Thyroid gland (tissue), 4 donors: ENCODE measurements at regions of chr10 and their contacts with region 1.

Region 1: GRCh38 chr10:114304017-114304570 is 65.0 kb downstream of the VWA2 start:
- DNase-seq: peak; percentile 89
- H3K4me3 ChIP-seq: peak overlapping the region in 1 of 3 donors; percentile 12
- H3K27ac ChIP-seq: peak overlapping the region; percentile 70 to 92 (median 77)
- H3K4me1 ChIP-seq: peaks cover 11 to 24% of the 10 kb centered on the region in 2 donors
- H3K27me3 ChIP-seq: no peaks in the 10 kb centered on the region
- CTCF ChIP-seq: peak; percentile 51 to 93 (median 76)
- POLR2A ChIP-seq: peak in 1 of 2 donors; percentile 26

Region 2: DNA sequence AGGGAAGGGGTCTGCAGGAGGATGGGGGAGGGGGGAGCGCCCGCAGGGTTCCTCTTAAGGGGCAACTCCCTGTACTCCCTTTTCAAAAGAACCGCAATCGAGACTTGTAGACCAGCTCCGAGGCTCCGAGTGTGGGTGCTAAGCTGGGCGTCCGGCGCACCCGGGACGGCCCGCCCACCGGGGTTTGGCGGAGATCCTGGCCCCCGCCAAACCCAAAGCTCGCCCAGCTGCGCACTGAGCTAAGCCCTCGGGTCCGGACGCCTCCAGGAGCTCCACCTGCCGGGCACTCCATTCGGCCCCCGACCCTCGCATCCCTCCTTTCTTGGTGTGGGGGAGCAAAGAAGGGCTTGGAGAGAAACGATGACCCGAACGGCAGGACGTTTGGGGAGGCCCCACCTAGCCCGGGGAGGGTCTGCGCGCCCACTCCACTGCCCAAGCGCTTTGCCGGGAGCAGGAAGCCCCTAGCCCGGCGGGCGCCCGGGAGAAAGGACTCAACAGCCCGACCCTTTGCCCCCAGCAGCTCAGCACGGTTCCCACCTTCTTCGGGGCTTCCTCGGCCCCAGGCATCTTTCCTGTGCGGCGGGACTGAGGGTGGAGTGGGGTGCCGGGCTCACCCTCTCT is 99.6 kb after region 1 on chr10:
- intact Hi-C with region 1: loop called (anchors 10 kb)
- DNase-seq: peak; percentile 75 to 76
- H3K4me3 ChIP-seq: peak overlapping the region; percentile 56 to 83 (median 66)
- H3K27ac ChIP-seq: peak overlapping the region; percentile 97 to 98 (median 98)
- H3K4me1 ChIP-seq: peaks cover 47 to 58% of the 10 kb centered on the region in 2 donors
- H3K27me3 ChIP-seq: no peaks in the 10 kb centered on the region
- CTCF ChIP-seq: peak in 3 of 6 experiments; percentile 25 to 45 (median 40)
- POLR2A ChIP-seq: peak in 1 of 2 donors; percentile 75

Region 3: DNA sequence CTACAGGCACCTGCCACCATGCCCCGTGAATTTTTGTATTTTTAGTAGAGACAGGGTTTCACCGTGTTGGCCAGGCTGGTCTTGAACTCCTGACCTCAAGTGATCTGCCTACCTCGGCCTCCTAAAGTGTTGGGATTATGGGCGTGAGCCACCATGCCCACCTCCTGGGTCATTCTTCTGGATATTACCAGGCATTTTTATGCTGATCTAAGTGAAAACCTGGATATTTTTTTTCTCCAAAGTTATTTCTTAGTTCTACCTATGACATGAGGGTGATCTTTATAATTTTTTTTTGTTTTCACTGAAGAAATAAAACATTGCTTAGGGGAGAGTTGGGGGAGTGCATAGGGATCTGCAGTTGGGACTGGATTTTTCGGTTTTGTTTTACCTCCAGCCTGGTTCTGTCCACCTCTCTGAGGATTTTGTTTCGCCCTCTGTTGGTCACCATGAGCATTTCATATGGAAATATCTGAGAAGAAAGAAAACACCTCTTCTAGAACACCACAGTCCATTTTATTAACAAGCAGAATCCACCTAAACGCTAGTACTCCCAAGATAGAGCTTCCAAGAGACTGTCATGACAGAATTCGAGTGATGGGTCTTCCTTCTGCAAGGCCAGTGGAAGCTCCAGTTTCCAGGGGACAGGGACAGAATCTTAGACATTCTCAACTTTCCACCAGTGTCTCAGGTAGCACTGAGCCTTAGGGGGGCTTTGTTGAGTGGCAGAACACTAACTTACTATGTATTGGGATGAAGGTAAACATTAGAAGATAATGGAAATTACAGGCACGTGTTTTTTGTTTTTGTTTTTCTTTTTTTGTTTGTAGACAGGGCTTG is 133.6 kb after region 1 on chr10:
- intact Hi-C with region 1: loop called (anchors 10 kb)
- DNase-seq: no peak
- H3K4me3 ChIP-seq: no peak overlapping the region
- H3K27ac ChIP-seq: peak overlapping the region; percentile 77 to 91 (median 87)
- H3K4me1 ChIP-seq: peaks cover 25 to 32% of the 10 kb centered on the region in 2 donors
- H3K27me3 ChIP-seq: no peaks in the 10 kb centered on the region
- CTCF ChIP-seq: peak in 4 of 6 experiments; percentile 19 to 46 (median 38)
- POLR2A ChIP-seq: no peak

Region 4: DNA sequence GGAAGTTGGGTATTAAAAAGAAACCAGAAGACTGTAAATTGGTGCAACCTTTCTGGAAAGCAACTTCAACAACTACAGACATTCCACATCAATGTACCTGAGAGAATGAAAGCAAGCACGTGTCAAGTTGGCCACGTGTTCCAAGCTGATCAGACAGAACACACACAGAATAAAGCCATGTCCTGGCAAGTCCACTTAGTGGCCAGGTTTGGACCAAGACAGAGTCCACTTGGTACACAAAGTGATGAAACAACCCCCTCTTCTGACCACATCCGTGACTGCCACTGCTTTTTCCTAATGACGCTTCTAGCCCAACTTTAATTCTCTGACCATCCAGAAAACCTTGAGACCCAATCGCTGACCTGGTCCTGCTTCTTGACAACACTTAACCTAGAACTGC is 244.6 kb after region 1 on chr10:
- intact Hi-C with region 1: loop called (anchors 10 kb)
- DNase-seq: peak; percentile 88 to 90
- H3K4me3 ChIP-seq: no peak overlapping the region
- H3K27ac ChIP-seq: peak overlapping the region; percentile 19 to 49 (median 47)
- H3K4me1 ChIP-seq: peaks cover 21 to 24% of the 10 kb centered on the region in 2 donors
- H3K27me3 ChIP-seq: no peaks in the 10 kb centered on the region
- CTCF ChIP-seq: peak in 4 of 6 experiments; percentile 65 to 95 (median 83)
- POLR2A ChIP-seq: peak in 1 of 2 donors; percentile 16

Region 5: DNA sequence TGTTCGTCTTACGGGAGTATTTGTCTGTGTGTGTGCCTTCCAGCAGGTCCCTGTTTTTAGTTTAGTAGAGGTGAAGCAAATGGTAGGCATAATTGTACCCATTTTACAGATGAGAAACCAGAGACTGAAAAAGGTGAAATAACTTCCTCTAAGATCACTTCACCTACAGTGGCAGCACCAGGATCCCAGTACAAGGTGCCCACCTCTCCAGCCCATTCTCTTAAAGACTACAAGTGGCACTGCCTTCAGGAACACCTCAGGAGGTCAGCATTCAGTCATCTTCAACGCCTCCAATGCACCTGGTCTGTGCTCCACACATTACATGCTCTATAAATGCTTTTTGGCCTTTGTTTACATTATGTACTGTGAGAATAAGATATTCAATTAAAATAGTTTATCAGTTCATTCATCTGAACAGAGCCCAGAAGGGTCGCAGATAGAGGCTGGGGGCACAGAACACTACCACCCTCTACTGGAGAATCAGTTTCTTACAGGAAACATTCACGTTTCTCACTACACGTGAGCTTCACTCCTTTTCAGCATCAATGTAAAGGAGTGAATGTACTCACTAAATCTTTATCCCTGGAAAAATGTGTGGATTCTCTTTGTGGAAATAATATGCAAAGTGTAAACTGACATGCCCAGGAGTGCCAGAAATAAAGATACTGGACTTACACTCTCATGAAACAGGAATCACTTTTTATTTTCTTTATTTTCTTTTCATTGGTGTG is 399.4 kb after region 1 on chr10:
- intact Hi-C with region 1: loop called (anchors 10 kb)
- DNase-seq: peak in 1 of 2 donors; percentile 20
- H3K4me3 ChIP-seq: no peak overlapping the region
- H3K27ac ChIP-seq: no peak overlapping the region
- H3K4me1 ChIP-seq: peaks cover 0 to 5% of the 10 kb centered on the region in 2 donors
- H3K27me3 ChIP-seq: no peaks in the 10 kb centered on the region
- CTCF ChIP-seq: peak; percentile 58 to 88 (median 68)
- POLR2A ChIP-seq: no peak